ENCODE measurements at regions of chr19 and their contacts with region 1.

Region 1: GRCh38 chr19:52853880-52854279 is 3.5 kb downstream of the ZNF468 start:
- DNase-seq: no peak
- ATAC-seq: no peak
- H3K4me3 ChIP-seq: no peak overlapping the region
- H3K27ac ChIP-seq: no peak overlapping the region
- H3K4me1 ChIP-seq: no peaks in the 10 kb centered on the region
- H3K27me3 ChIP-seq: no peaks in the 10 kb centered on the region
- CTCF ChIP-seq: no peak

Region 2: GRCh38 chr19:52823676-52824075 is 30.2 kb before region 1 on chr19:
- intact Hi-C with region 1: loop called in 1 of 2 experiments (anchors 5 kb)
- DNase-seq: no peak
- ATAC-seq: no peak
- H3K4me3 ChIP-seq: no peak overlapping the region
- H3K27ac ChIP-seq: no peak overlapping the region
- H3K4me1 ChIP-seq: no peaks in the 10 kb centered on the region
- H3K27me3 ChIP-seq: no peaks in the 10 kb centered on the region
- CTCF ChIP-seq: no peak

Measured in psoas muscle (tissue), 8 donors.